ENCODE measurements at regions of chr7 and their contacts with region 1.

Region 1: DNA sequence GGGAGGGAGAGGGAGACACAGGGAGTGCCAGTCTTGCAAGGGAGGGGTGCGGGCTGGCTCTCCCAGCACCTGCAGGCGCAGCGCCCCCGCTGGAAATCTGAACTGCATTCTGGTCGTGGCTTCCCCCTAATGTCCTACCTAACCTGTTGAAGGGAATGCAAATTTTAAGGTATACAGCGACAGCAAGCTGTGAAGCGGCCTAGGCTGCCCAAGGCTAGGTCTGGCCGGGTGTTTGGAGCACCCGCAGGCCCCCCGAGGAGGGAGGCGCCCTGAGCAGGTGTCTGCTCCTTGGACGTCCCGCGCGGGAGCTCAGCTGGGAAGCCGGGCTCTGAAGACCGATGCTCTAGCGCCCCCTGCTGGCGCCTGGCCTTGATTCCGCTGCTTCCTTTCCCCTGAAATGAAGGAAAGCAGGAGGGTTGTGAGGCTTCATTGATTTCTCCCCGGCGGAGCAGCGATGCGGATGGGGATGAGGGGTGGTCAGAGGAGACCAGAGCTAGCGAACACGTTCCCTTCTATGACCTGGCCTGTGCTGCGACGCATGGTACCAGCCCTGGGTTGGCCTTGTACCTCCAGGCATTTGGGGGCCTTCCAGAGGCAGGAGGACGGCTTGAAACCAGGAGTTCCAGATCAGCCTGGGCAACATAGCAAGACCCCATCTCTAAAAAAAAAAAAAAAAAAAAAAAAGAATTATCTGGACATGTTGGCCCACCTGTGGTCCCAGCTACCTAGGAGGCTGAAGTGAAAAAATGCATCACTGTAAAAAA is 601.3 kb downstream of the GALNT17 start:
- DNase-seq: peak; percentile 80
- ATAC-seq: peak; percentile 74

Region 2: GRCh38 chr7:70829221-70830059 is 903.8 kb before region 1 on chr7:
- intact Hi-C with region 1: loop called (anchors 2 kb)
- DNase-seq: no peak
- ATAC-seq: peak; percentile 73

Region 3: GRCh38 chr7:70856866-70857630 is 876.2 kb before region 1 on chr7:
- intact Hi-C with region 1: loop called (anchors 1 kb)
- DNase-seq: no peak
- ATAC-seq: no peak

Region 4: DNA sequence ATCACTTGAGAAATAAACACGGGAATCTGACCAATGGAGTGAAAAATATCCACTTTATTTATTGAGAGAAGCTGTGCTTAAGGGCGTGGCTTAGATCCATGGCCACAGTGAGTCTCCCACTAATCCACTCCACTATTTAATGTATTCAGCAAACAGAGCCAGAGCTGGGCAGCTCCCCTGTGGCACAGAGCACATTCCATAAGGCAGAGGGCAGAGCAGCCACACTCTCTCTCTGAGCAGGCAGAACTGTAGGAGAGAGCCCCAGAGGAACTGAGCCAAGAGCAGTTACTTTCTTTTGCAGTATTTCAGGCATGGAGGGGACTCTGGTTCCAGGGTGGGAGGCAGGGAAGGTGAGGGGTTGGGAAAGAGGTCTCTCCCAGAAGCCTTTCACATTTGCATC is 495.3 kb before region 1 on chr7:
- intact Hi-C with region 1: loop called (anchors 10 kb)
- DNase-seq: no peak
- ATAC-seq: peak; percentile 90

Region 5: GRCh38 chr7:71264005-71264404 is 469.3 kb before region 1 on chr7:
- intact Hi-C with region 1: loop called (anchors 5 kb)
- DNase-seq: no peak
- ATAC-seq: peak; percentile 81

Region 6: DNA sequence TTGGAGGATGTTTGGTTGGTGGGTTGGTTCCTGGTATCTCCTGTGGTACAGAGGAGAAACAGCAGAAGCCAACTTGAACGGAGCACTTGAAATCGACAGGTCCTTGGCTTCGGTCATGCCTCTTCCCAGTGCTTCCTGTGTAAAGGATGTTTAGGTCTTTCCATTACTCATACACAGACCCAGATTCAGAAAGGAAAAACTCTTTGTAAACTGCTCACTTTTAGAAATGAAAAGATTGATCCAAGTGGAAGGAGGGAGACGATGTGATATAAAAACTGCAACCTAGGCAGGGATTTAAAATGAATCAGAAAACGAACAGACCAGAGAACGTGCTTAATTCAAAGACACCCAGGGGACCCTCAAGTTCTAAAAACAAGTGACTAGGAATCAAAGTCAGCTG is 263.0 kb before region 1 on chr7:
- intact Hi-C with region 1: no loop called
- DNase-seq: no peak
- ATAC-seq: no peak

Measured in Right ventricle myocardium inferior (tissue), 1 donor.